H1 (cell line): ENCODE measurements at regions of chr7 and their contacts with region 1.

Region 1: GRCh38 chr7:105141068-105141467 is 127.1 kb downstream of the KMT2E start:
- DNase-seq: peak in 1 of 2 experiments; percentile 33
- H3K4me3 ChIP-seq: no peak overlapping the region
- H3K27ac ChIP-seq: no peak overlapping the region
- H3K4me1 ChIP-seq: no peaks in the 10 kb centered on the region; a peak in 1 of 7 replicates
- H3K27me3 ChIP-seq: no peaks in the 10 kb centered on the region
- CTCF ChIP-seq: peak; percentile 30 to 65 (median 54)
- EP300 ChIP-seq: no peak
- POLR2A ChIP-seq: no peak
- RAD21 ChIP-seq: peak; percentile 59 to 68

Region 2: DNA sequence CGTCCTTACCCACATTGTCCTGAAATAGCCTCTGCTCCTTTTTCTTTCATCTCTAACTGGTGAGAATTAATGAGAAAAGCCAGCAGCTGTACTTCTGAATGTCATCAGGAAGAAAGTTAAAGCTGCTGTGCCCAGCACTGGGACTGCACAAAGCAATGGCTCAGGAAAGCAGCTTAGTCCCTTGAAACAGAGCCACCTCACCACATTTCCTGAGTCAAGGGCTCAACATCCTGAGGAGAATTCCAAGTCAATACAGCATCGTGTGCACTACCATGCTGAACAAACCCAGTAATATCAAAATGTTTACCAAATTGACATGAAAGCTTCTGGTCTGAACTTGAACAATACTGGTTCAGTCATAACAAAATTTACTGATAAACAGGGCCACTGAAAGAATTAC is 13.0 kb after region 1 on chr7:
- CTCF ChIA-PET with region 1: interaction called, 15 read pairs
- POLR2A ChIA-PET with region 1: no interaction called
- DNase-seq: no peak
- H3K4me3 ChIP-seq: no peak overlapping the region
- H3K27ac ChIP-seq: no peak overlapping the region
- H3K4me1 ChIP-seq: no peaks in the 10 kb centered on the region
- H3K27me3 ChIP-seq: no peaks in the 10 kb centered on the region
- CTCF ChIP-seq: no peak
- EP300 ChIP-seq: no peak
- POLR2A ChIP-seq: no peak
- RAD21 ChIP-seq: no peak